ENCODE measurements at regions of chr1 and their contacts with region 1.

Region 1: GRCh38 chr1:205321164-205321958 is at the start of gene NUAK2:
- DNase-seq: no peak
- H3K4me3 ChIP-seq: peak within 1 kb of the TSS; percentile 84
- H3K27me3 ChIP-seq: no peaks in the 10 kb centered on the region; the same call in 1 of the 2 replicates
- CTCF ChIP-seq: peak; percentile 37; the same call in 1 of the 2 replicates
- polyA plus RNA-seq, gene NUAK2: 3.4 and 5.8 TPM in 2 replicates

Region 2: DNA sequence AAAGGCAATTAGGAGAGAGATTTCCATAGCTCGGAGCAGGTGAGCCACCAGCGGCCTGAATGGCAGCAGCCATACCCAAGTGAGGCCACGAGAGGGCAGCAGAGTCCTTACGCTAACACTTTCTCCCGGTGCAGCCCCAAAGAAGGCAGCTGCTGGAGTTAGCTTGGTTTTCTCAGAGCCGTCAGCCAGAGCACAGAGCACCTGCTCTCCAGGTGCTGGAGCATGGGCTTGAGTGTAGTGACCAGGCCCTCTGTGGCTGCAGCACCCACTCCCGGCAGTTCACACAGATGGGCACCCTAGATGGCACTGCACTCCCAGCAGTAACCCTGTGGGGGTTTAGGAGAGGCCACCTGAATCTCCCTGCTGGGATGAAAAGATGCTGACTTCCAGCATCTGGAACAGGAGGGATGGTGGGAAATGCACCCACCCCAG is 47.8 kb before region 1 on chr1:
- CTCF ChIA-PET with region 1: interaction called, 679 read pairs
- POLR2A ChIA-PET with region 1: interaction called, 5 read pairs
- DNase-seq: no peak
- H3K4me3 ChIP-seq: no peak overlapping the region
- H3K27me3 ChIP-seq: no peaks in the 10 kb centered on the region
- CTCF ChIP-seq: peak; percentile 98

Region 3: GRCh38 chr1:205284343-205285144 is 36.8 kb before region 1 on chr1:
- CTCF ChIA-PET with region 1: interaction called, 43 read pairs
- POLR2A ChIA-PET with region 1: no interaction called
- DNase-seq: peak; percentile 92
- H3K4me3 ChIP-seq: no peak overlapping the region
- H3K27me3 ChIP-seq: no peaks in the 10 kb centered on the region
- CTCF ChIP-seq: peak; percentile 44

Region 4: DNA sequence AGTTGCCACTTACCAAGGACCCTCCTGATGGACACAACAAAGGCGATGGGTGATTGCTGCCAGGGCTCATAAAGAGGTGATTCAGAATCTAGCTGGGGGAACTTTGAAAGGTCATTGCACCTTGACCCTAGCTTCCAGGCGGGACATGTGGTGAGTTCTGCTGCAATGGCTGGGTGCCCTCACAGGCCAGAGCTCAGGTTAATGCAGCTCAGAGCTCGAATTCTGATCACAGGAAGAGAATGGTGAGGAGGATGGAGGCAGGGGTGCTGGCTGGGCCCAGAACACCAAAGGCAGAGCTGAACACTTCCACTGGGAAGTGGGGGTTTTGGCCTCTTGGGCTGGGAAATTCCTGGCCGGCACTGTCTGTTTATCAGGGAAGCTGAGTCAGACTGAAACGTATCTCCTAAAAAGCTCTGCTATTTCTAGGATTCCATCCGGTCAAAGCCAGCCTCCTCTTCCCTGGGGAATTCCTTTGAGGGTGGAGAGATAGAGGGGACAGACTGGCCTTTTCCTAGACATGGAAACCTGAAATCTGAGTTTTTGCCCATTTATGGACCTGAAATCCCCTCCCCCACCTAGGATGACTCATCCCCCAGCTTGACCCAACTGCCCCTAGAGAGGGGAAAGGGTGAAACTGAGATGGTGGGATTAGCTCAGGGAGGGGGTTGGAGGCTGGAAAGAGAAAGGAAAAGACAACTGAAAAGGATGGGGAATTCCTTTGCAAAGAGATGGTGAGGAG is 27.0 kb before region 1 on chr1:
- CTCF ChIA-PET with region 1: interaction called, 36 read pairs
- POLR2A ChIA-PET with region 1: interaction called, 3 read pairs
- DNase-seq: peak; percentile 79
- H3K4me3 ChIP-seq: no peak overlapping the region
- H3K27me3 ChIP-seq: no peaks in the 10 kb centered on the region
- CTCF ChIP-seq: no peak

Region 5: GRCh38 chr1:205300886-205301821 is 20.2 kb before region 1 on chr1:
- CTCF ChIA-PET with region 1: interaction called, 36 read pairs
- POLR2A ChIA-PET with region 1: interaction called, 3 read pairs
- DNase-seq: peak; percentile 82
- H3K4me3 ChIP-seq: no peak overlapping the region
- H3K27me3 ChIP-seq: no peaks in the 10 kb centered on the region
- CTCF ChIP-seq: no peak

Region 6: GRCh38 chr1:205335643-205336091 is 14.3 kb after region 1 on chr1:
- CTCF ChIA-PET with region 1: interaction called, 31 read pairs
- POLR2A ChIA-PET with region 1: no interaction called
- DNase-seq: no peak
- H3K4me3 ChIP-seq: no peak overlapping the region
- H3K27me3 ChIP-seq: peaks cover 28% of the 10 kb centered on the region
- CTCF ChIP-seq: peak; percentile 99

Region 7: DNA sequence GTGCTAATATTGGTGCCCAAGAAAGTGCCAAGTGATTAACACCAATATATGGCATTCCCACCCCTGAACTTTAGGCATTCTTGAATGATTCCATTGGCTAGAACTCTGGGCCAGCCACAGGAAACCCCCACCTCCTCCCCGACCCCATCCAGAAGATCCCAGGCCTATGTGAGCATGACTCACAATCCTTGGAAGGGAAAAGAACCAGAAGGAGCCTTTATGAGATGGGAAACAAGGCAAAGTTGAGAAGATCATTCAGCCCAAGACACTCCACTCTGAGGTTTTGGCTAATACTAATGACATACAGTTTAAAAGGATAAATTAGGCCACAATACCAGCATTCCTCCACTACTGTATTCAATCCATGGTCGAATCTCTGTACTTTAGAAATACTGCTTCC is 288.7 kb after region 1 on chr1:
- CTCF ChIA-PET with region 1: no interaction called
- POLR2A ChIA-PET with region 1: no interaction called
- DNase-seq: no peak
- H3K4me3 ChIP-seq: no peak overlapping the region
- H3K27me3 ChIP-seq: no peaks in the 10 kb centered on the region
- CTCF ChIP-seq: no peak

Measured in BJ (cell line).